Activated naive CD8-positive, alpha-beta T cell treated with anti-CD3 and anti-CD28 coated beads, Interleukin-2, amount 10 ng/mL, durations not matched to agents 7 days and 5 days (primary cell): ENCODE measurements at regions of chr19 and their contacts with region 1.

Region 1: DNA sequence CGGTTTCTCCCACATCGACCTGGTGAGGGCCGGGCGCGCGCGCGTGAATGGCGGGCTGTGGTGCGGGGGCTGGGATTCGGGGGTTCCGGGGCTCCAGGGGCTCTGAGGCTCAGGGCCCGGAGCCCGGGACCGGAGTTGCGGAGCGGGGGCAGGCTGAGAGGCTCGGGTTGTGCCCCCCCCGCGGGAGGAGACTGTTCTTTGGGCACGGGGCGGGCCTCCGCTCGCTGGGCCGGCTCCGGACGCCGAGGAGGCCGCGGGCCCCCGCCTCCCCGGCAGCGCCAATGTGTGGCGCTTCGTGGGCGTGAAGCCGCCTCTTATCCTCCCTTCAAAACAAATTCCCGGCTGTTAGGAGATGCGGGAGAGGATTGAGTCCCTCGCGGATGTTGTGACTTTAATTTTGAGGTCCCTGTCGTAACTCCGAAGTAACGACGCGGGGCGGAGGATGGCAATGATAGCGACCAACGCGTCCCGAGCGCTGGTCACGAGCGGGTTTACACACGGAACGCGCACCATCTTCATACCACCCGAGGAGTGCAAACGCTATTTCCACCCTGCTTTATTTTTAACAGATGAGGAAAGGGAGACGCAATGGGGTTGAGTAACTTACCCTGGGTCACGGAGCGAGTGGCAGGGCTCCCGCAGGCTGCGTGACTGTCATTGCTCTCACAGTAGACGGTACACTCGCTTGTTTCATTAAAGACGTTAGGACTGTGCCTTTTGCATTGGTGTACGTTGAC is 536 bp downstream of the UBA2 start:
- DNase-seq: no peak
- ATAC-seq: peak; percentile 59
- H3K4me3 Mint-ChIP-seq: peak overlapping the region; percentile 98
- H3K27ac Mint-ChIP-seq: peak overlapping the region; percentile 93
- H3K4me1 Mint-ChIP-seq: peaks cover 22% of the 10 kb centered on the region
- H3K27me3 Mint-ChIP-seq: no peaks in the 10 kb centered on the region

Region 2: GRCh38 chr19:34404109-34404897 is 24.4 kb before region 1 on chr19 and contains the start of gene PDCD2L:
- POLR2A ChIA-PET with region 1: interaction called, 21 read pairs
- DNase-seq: peak; percentile 90
- ATAC-seq: peak; percentile 95
- H3K4me3 Mint-ChIP-seq: peak within 1 kb of the TSS; percentile 90
- H3K27ac Mint-ChIP-seq: peak within 1 kb of the TSS; percentile 83
- H3K4me1 Mint-ChIP-seq: peaks cover 17% of the 10 kb centered on the region
- H3K27me3 Mint-ChIP-seq: no peaks in the 10 kb centered on the region
- total RNA-seq, gene PDCD2L: 9.4 to 13.3 TPM

Region 3: GRCh38 chr19:34416021-34416545 is 12.6 kb before region 1 on chr19:
- POLR2A ChIA-PET with region 1: no interaction called
- DNase-seq: no peak
- ATAC-seq: no peak
- H3K4me3 Mint-ChIP-seq: no peak overlapping the region
- H3K27ac Mint-ChIP-seq: peak overlapping the region; percentile 73
- H3K4me1 Mint-ChIP-seq: peaks cover 4% of the 10 kb centered on the region
- H3K27me3 Mint-ChIP-seq: no peaks in the 10 kb centered on the region